ENCODE measurements at regions of chr6 and their contacts with region 1.

Region 1: GRCh38 chr6:52647199-52647598 is 23.7 kb upstream of the TMEM14A start:
- DNase-seq: no peak
- ATAC-seq: no peak
- H3K4me3 ChIP-seq: no peak overlapping the region
- H3K4me3 Mint-ChIP-seq: no peak overlapping the region
- H3K27ac ChIP-seq: no peak overlapping the region
- H3K27ac Mint-ChIP-seq: no peak overlapping the region
- H3K4me1 ChIP-seq: no peaks in the 10 kb centered on the region
- H3K4me1 Mint-ChIP-seq: peaks cover 5 to 8% (median 5%) of the 10 kb centered on the region in 3 donors
- H3K27me3 ChIP-seq: peaks cover 0 to 8% of the 10 kb centered on the region in 2 experiments
- H3K27me3 Mint-ChIP-seq: peaks cover 6 to 15% of the 10 kb centered on the region in 2 donors

Region 2: DNA sequence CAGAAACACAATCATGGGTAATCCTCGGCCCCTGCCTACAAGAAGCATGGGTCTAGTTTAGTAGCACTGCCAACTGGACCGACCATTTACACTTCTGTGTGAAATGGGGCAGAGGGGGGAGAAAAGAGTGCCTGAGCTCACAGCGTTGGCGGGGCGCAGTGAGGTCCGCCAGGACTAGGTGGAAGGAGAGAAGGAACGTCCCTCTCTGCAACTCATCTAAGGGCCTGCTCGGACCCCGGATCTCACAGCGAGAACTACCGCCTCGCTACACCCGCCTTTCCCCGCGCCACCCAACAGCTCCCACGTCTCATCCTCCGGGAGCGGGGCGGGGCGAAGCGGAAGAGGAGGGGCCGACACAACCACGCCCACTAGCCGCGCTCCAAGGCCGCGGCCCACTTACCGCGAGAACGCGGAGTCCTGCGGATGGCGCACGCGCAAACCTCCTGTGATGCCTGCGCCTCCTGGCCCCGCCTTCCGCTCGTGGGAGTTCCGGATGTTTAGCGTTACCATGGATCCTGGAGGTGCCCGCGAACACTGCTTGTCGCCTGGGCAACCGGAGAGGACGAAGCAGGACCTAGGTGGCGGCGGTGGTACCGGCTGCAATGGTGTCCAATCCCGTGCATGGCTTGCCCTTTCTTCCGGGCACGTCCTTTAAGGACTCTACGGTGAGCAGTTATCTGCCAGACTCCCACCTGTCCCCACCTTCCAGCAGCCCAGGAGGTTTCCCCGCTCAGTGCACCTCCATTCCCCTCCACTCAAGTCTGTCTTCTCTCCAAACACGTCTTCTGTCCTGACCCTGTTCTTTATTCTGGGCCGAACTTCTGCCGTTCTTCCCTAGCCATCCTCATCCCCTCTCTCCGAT is 227.2 kb before region 1 on chr6 and contains the start of gene EFHC1:
- CTCF ChIA-PET with region 1: interaction called, 4 to 11 read pairs
- POLR2A ChIA-PET with region 1: no interaction called
- DNase-seq: peak; percentile 93 to 99 (median 96)
- ATAC-seq: peak; percentile 91 to 95 (median 94)
- H3K4me3 ChIP-seq: peak within 1 kb of the TSS; percentile 60 to 67
- H3K4me3 Mint-ChIP-seq: no peak within 1 kb of the TSS
- H3K27ac ChIP-seq: peak within 1 kb of the TSS; percentile 62
- H3K27ac Mint-ChIP-seq: peak within 1 kb of the TSS in 1 of 2 donors; percentile 66
- H3K4me1 ChIP-seq: peaks cover 7 to 17% of the 10 kb centered on the region in 2 experiments
- H3K4me1 Mint-ChIP-seq: peaks cover 15 to 20% (median 15%) of the 10 kb centered on the region in 3 donors
- H3K27me3 ChIP-seq: peaks cover 0 to 8% of the 10 kb centered on the region in 2 experiments
- H3K27me3 Mint-ChIP-seq: no peaks in the 10 kb centered on the region
- total RNA-seq, gene EFHC1: 4.5 to 8.6 (median 6.2) TPM

Region 3: DNA sequence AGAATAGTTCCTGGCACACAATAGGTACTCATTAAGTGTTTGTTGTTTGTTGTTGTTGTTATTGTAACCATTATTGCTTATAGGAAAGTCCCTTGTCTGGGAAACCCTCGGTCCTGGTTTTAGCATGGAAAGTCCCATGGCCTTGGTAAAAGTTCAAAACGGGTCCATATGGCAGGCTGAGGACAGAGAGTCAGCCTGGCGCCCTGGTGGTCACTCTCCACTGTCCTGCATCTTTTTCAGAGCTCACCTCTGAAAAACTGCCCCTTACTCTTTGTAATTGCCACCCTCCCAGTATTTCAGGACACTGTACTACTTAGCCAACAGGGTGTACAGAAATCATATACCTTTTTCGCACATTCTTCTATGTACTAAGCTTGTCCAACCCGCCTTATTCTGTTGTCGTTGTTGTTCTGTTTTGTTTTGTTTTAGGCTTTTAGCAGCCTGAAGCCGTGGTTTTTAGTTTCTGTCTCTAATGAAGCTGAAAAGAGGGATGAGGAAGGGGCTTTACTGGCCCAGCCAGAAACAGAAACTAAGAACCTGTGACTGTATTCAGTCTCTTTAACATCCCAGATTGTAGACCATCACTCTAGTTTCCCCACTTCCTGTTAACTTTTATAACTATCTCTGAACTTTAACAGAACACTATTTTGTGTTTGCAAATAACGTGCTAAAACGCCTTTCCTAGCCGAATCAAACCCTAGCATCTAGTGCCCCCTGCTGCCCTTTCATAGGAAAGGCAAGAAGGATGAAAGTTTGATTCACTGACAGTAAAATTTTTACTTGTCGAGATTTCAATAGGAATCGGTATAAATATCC is 16.1 kb after region 1 on chr6:
- CTCF ChIA-PET with region 1: interaction called, 7 to 33 read pairs
- POLR2A ChIA-PET with region 1: no interaction called
- DNase-seq: peak in 34 of 35 experiments; percentile 25 to 89 (median 50)
- ATAC-seq: peak; percentile 61 to 78 (median 74)
- H3K4me3 ChIP-seq: peak overlapping the region; percentile 54 to 70
- H3K4me3 Mint-ChIP-seq: no peak overlapping the region
- H3K27ac ChIP-seq: no peak overlapping the region
- H3K27ac Mint-ChIP-seq: no peak overlapping the region
- H3K4me1 ChIP-seq: peaks cover 3 to 18% of the 10 kb centered on the region in 2 experiments
- H3K4me1 Mint-ChIP-seq: no peaks in the 10 kb centered on the region
- H3K27me3 ChIP-seq: peaks cover 0 to 21% of the 10 kb centered on the region in 2 experiments
- H3K27me3 Mint-ChIP-seq: no peaks in the 10 kb centered on the region

Region 4: GRCh38 chr6:52779237-52779636 is 132.0 kb after region 1 on chr6:
- CTCF ChIA-PET with region 1: no interaction called
- POLR2A ChIA-PET with region 1: no interaction called
- DNase-seq: no peak
- ATAC-seq: no peak
- H3K4me3 ChIP-seq: no peak overlapping the region
- H3K4me3 Mint-ChIP-seq: no peak overlapping the region
- H3K27ac ChIP-seq: no peak overlapping the region
- H3K27ac Mint-ChIP-seq: no peak overlapping the region
- H3K4me1 ChIP-seq: no peaks in the 10 kb centered on the region
- H3K4me1 Mint-ChIP-seq: no peaks in the 10 kb centered on the region
- H3K27me3 ChIP-seq: peaks cover 0 to 2% of the 10 kb centered on the region in 2 experiments
- H3K27me3 Mint-ChIP-seq: peaks cover 28 to 37% of the 10 kb centered on the region in 2 donors

Region 5: GRCh38 chr6:53718597-53719460 is 1071.6 kb after region 1 on chr6:
- CTCF ChIA-PET with region 1: no interaction called
- POLR2A ChIA-PET with region 1: no interaction called
- DNase-seq: peak in 6 of 35 experiments; percentile 2 to 71 (median 18)
- ATAC-seq: peak in 3 of 4 experiments; percentile 46 to 66 (median 54)
- H3K4me3 ChIP-seq: no peak overlapping the region
- H3K4me3 Mint-ChIP-seq: no peak overlapping the region
- H3K27ac ChIP-seq: no peak overlapping the region
- H3K27ac Mint-ChIP-seq: no peak overlapping the region
- H3K4me1 ChIP-seq: no peaks in the 10 kb centered on the region
- H3K4me1 Mint-ChIP-seq: peaks cover 2 to 6% (median 5%) of the 10 kb centered on the region in 3 donors
- H3K27me3 ChIP-seq: no peaks in the 10 kb centered on the region
- H3K27me3 Mint-ChIP-seq: peaks cover 0 to 17% of the 10 kb centered on the region in 2 donors

Measured in T-cell (primary cell).